CD8-positive, alpha-beta memory T cell (primary cell): ENCODE measurements at regions of chr10 and their contacts with region 1.

Region 1: GRCh38 chr10:71771821-71772617 is 1.3 kb downstream of the VSIR start:
- DNase-seq: peak in 2 of 5 donors; percentile 40 to 55
- H3K4me3 ChIP-seq: peak overlapping the region; percentile 94
- H3K4me3 Mint-ChIP-seq: peak overlapping the region; percentile 79 to 98 (median 92)
- H3K27ac ChIP-seq: peak overlapping the region; percentile 80
- H3K27ac Mint-ChIP-seq: peak overlapping the region; percentile 90 to 98 (median 94)
- H3K4me1 ChIP-seq: peaks cover 81% of the 10 kb centered on the region
- H3K4me1 Mint-ChIP-seq: peaks cover 76 to 88% (median 83%) of the 10 kb centered on the region in 3 donors
- H3K27me3 ChIP-seq: no peaks in the 10 kb centered on the region
- H3K27me3 Mint-ChIP-seq: no peaks in the 10 kb centered on the region

Region 2: DNA sequence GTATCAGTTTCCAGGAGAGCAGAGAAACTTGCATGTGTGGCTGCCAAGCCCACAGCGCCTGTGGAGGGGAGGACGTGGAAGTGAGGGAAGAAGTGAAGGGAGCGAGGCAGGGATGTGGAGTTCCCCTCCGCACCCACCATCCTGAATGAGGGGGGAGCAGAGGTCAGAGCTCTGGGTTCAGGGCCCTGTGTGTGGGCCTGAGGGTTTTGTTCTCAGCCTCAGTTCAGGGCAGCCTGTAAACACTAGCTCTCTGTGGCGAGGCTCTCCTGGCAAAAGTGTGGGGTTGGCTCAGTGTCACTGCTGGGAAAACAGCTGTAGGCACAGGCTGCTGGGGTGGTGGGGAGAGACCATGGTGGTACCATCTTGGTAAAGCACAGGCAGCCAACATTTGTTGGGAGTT is 160.9 kb before region 1 on chr10:
- CTCF ChIA-PET with region 1: no interaction called
- POLR2A ChIA-PET with region 1: interaction called, 12 read pairs
- DNase-seq: no peak
- H3K4me3 ChIP-seq: no peak overlapping the region
- H3K4me3 Mint-ChIP-seq: no peak overlapping the region
- H3K27ac ChIP-seq: no peak overlapping the region
- H3K27ac Mint-ChIP-seq: no peak overlapping the region
- H3K4me1 ChIP-seq: no peaks in the 10 kb centered on the region
- H3K4me1 Mint-ChIP-seq: peaks cover 0 to 3% (median 1%) of the 10 kb centered on the region in 3 donors
- H3K27me3 ChIP-seq: no peaks in the 10 kb centered on the region
- H3K27me3 Mint-ChIP-seq: peaks cover 8 to 24% of the 10 kb centered on the region in 2 donors

Region 3: GRCh38 chr10:71708301-71708703 is 63.7 kb before region 1 on chr10:
- CTCF ChIA-PET with region 1: interaction called, 50 read pairs
- POLR2A ChIA-PET with region 1: interaction called, 5 read pairs
- DNase-seq: peak; percentile 42 to 76 (median 49)
- H3K4me3 ChIP-seq: peak overlapping the region; percentile 26
- H3K4me3 Mint-ChIP-seq: peak overlapping the region in 3 of 7 donors; percentile 20 to 78 (median 32)
- H3K27ac ChIP-seq: no peak overlapping the region
- H3K27ac Mint-ChIP-seq: peak overlapping the region in 4 of 8 donors; percentile 17 to 72 (median 56)
- H3K4me1 ChIP-seq: peaks cover 30% of the 10 kb centered on the region
- H3K4me1 Mint-ChIP-seq: peaks cover 39 to 54% (median 39%) of the 10 kb centered on the region in 3 donors
- H3K27me3 ChIP-seq: no peaks in the 10 kb centered on the region
- H3K27me3 Mint-ChIP-seq: no peaks in the 10 kb centered on the region

Region 4: DNA sequence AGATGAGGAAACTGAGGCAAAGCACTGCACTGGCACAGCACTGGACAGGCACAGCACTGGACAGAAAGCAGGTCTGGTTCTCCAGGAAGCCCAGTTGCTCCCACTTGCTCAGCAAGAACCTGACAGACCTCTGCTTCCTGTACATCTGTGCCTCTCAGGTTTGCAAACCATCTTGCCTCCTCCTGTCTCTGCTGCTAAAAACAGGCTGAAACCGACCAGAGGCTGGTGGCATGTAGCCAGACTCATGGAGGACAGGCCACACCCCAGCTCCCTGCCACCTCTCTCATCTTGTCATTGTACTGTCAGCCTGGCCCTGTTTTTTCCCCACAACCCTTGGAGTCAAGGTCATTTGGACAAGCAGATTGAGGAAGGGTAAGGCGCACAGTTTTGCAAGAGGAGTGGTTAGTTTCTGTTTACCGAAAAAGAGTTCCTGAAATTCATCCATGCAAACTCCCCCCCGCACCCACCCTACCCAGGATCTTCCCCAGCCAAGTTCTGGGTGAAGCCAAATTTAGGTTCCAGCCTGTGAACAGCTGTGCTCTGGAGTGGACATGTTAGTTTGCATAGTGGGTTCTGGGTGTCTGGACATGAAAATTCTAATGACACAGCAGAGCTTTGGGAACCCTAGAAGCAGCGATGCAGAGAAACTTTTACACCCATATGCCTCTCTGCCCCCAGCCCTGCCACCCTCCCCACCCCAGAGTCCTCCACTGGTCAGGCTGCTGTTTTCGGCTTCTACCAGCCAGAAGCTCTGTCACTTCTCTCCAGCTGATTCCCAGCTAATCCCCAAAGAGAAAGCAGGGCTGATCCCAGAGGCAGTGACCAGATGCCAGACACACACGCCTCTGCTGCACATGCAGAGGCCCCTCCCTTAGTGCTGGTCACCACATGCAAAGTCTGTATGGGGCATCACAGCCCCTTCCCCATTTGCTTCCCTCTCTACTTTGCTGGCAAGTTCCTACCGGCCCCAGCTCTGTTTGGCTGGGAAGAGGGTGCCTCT is 44.0 kb before region 1 on chr10:
- CTCF ChIA-PET with region 1: interaction called, 122 read pairs
- POLR2A ChIA-PET with region 1: interaction called, 42 read pairs
- DNase-seq: peak; percentile 65 to 90 (median 85)
- H3K4me3 ChIP-seq: peak overlapping the region; percentile 24
- H3K4me3 Mint-ChIP-seq: peak overlapping the region; percentile 64 to 88 (median 79)
- H3K27ac ChIP-seq: peak overlapping the region; percentile 77
- H3K27ac Mint-ChIP-seq: peak overlapping the region; percentile 97 to 99 (median 98)
- H3K4me1 ChIP-seq: peaks cover 96% of the 10 kb centered on the region
- H3K4me1 Mint-ChIP-seq: peaks cover 73 to 96% (median 81%) of the 10 kb centered on the region in 3 donors
- H3K27me3 ChIP-seq: no peaks in the 10 kb centered on the region
- H3K27me3 Mint-ChIP-seq: peaks cover 0 to 2% of the 10 kb centered on the region in 2 donors

Region 5: DNA sequence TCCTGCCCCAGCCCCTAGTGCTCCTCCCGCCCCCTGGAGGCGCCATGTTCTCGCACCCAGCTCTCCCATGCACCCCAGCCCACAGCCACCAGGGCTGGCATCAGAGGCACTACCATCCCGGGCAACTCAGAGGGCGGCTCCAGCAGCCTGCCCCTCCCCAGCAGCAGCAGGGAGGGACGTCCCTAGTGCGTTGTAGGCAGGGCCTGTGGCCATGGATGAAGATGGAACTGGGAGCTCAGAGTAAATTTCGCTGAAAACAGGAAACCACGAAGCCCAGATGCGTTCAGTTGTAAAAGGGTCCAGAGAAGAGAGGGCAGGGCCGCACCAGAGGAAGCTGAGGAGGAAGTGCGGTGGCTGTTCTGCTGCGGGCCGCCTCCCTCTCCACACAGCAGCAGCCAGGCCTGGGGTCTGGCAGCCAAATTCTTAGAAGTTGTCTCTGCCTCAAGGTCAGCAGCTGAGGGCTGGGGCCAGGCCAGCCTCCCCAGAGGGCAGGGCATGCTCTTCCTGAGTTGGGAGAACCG is 23.3 kb before region 1 on chr10:
- CTCF ChIA-PET with region 1: interaction called, 89 read pairs
- POLR2A ChIA-PET with region 1: interaction called, 25 read pairs
- DNase-seq: peak; percentile 62 to 89 (median 82)
- H3K4me3 ChIP-seq: peak overlapping the region; percentile 38
- H3K4me3 Mint-ChIP-seq: peak overlapping the region; percentile 64 to 87 (median 75)
- H3K27ac ChIP-seq: peak overlapping the region; percentile 60
- H3K27ac Mint-ChIP-seq: peak overlapping the region; percentile 93 to 99 (median 96)
- H3K4me1 ChIP-seq: peaks cover 99% of the 10 kb centered on the region
- H3K4me1 Mint-ChIP-seq: peaks cover 94 to 98% (median 96%) of the 10 kb centered on the region in 3 donors
- H3K27me3 ChIP-seq: no peaks in the 10 kb centered on the region
- H3K27me3 Mint-ChIP-seq: no peaks in the 10 kb centered on the region

Region 6: GRCh38 chr10:71784679-71785272 is 12.8 kb after region 1 on chr10:
- CTCF ChIA-PET with region 1: interaction called, 12 read pairs
- POLR2A ChIA-PET with region 1: no interaction called
- DNase-seq: no peak
- H3K4me3 ChIP-seq: no peak overlapping the region
- H3K4me3 Mint-ChIP-seq: no peak overlapping the region
- H3K27ac ChIP-seq: no peak overlapping the region
- H3K27ac Mint-ChIP-seq: peak overlapping the region in 1 of 8 donors; percentile 71
- H3K4me1 ChIP-seq: no peaks in the 10 kb centered on the region
- H3K4me1 Mint-ChIP-seq: peaks cover 0 to 2% (median 0%) of the 10 kb centered on the region in 3 donors
- H3K27me3 ChIP-seq: no peaks in the 10 kb centered on the region
- H3K27me3 Mint-ChIP-seq: no peaks in the 10 kb centered on the region